HAP-1 (cell line): ENCODE measurements at regions of chr4 and their contacts with region 1.

Region 1: GRCh38 chr4:165464813-165465381 is 86.1 kb downstream of the CPE start:
- DNase-seq: peak in 1 of 2 experiments; percentile 50
- H3K4me3 ChIP-seq: no peak overlapping the region
- H3K4me1 ChIP-seq: no peaks in the 10 kb centered on the region
- H3K27me3 ChIP-seq: no peaks in the 10 kb centered on the region

Region 2: GRCh38 chr4:164779811-164780216 is 685.1 kb before region 1 on chr4:
- in situ Hi-C with region 1: loop called (anchors 25 kb)
- DNase-seq: peak; percentile 79 to 83
- H3K4me3 ChIP-seq: no peak overlapping the region
- H3K4me1 ChIP-seq: peaks cover 8% of the 10 kb centered on the region
- H3K27me3 ChIP-seq: no peaks in the 10 kb centered on the region

Region 3: DNA sequence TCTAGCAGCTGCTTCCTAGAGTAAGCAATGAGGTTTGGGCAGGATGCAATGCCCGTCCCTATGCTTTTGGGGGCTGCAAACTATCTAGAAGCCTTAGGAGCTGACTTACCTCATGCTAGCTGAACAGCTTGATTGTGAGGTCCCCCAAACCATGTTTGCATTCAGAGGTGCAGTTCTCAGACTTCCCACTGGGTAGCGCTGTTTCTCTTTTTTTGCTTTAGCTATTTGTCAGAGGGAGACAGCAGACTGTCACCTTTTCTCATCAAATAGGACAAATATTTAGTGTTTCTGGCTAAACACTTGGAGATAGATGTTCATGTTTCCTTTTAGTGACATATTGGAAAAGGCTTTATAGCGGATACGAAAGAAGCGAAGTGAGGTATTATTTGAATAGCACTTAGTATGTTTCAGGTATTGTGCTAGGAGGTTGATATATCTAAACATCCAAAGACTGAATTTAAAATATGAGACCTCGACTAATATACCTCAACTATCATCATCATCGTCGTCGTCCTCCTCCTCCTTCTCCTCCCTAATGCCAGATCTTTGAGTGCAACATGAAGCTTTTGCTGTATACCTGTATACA is 333.6 kb before region 1 on chr4:
- in situ Hi-C with region 1: loop called (anchors 5 kb)
- DNase-seq: peak; percentile 42 to 86
- H3K4me3 ChIP-seq: no peak overlapping the region
- H3K4me1 ChIP-seq: no peaks in the 10 kb centered on the region
- H3K27me3 ChIP-seq: peaks cover 4% of the 10 kb centered on the region; the same call in 1 of the 2 replicates

Region 4: DNA sequence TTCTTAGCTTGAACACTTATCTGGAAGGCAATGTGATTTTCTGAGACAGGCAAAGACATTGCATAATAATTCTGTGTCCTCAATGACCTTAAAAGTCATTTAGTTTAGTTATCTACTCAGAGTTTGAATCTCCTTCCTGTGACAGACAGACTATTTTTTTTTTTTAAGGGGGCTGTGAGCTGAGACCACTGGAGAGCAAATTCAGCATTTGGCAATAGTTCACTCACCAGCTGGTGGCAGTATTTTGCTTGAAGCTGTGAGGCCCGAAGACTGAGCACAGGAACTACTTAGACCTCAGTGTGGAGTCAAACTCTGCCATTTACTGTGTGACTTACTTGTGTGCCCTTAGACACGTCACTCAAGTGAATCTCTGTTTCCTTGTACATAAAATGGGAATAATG is 109.0 kb before region 1 on chr4:
- in situ Hi-C with region 1: loop called (anchors 10 kb)
- DNase-seq: peak in 1 of 2 experiments; percentile 51
- H3K4me3 ChIP-seq: no peak overlapping the region
- H3K4me1 ChIP-seq: no peaks in the 10 kb centered on the region
- H3K27me3 ChIP-seq: peaks cover 6% of the 10 kb centered on the region